ENCODE measurements at regions of chr6 and their contacts with region 1.

Region 1: DNA sequence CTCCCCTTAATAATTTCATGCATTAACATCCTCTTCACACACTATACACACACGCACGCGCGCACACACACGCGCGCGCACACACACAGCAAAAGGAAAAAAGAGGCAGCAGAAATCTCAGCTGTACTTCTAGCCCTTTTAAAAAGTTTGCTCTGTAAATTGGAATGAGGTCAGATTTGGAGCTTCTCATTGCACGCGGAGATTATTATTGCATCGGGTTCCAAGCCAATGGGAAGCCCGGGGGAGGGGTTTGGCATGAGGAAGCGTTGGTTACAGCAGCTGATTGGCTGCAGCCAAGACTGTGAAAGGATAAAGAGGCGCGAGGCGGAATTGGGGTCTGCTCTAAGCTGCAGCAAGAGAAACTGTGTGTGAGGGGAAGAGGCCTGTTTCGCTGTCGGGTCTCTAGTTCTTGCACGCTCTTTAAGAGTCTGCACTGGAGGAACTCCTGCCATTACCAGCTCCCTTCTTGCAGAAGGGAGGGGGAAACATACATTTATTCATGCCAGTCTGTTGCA is at the start of gene SOX4:
- DNase-seq: peak in 34 of 35 experiments; percentile 14 to 82 (median 66)
- ATAC-seq: peak; percentile 59 to 82 (median 66)
- H3K4me3 ChIP-seq: peak within 1 kb of the TSS; percentile 55 to 98
- H3K4me3 Mint-ChIP-seq: peak within 1 kb of the TSS in 2 of 3 donors; percentile 83 to 87
- H3K27ac ChIP-seq: no peak within 1 kb of the TSS
- H3K27ac Mint-ChIP-seq: peak within 1 kb of the TSS; percentile 52 to 77
- H3K4me1 ChIP-seq: peaks cover 5 to 31% of the 10 kb centered on the region in 2 experiments
- H3K4me1 Mint-ChIP-seq: peaks cover 25 to 30% (median 26%) of the 10 kb centered on the region in 3 donors
- H3K27me3 ChIP-seq: peaks cover 0 to 42% of the 10 kb centered on the region in 2 experiments
- H3K27me3 Mint-ChIP-seq: peaks cover 15 to 47% of the 10 kb centered on the region in 2 donors
- total RNA-seq, gene SOX4: 1.5 to 15.8 (median 2.9) TPM

Region 2: DNA sequence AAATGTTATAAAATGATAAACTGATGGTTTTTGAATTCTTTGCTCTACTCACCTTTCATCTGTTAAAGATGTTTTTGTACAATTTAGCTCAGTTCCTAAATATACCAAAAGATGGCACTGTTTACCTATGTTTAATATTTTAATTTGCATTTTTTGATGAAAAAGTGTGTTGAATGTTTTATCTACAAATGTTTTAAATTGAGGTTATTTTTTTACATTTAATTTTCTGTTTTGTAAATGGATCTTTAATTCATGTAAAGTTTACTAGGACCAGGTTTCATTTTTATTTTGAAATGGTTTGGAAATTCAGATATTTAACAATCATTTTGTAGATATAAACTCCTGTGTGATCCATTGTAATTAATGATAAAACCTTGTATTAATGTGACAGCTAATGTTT is 1029.2 kb before region 1 on chr6:
- CTCF ChIA-PET with region 1: interaction called, 25 to 120 read pairs
- POLR2A ChIA-PET with region 1: no interaction called
- DNase-seq: peak in 1 of 35 experiments; percentile 52
- ATAC-seq: no peak
- H3K4me3 ChIP-seq: no peak overlapping the region
- H3K4me3 Mint-ChIP-seq: no peak overlapping the region
- H3K27ac ChIP-seq: no peak overlapping the region
- H3K27ac Mint-ChIP-seq: no peak overlapping the region
- H3K4me1 ChIP-seq: peaks cover 0 to 15% of the 10 kb centered on the region in 2 experiments
- H3K4me1 Mint-ChIP-seq: peaks cover 9 to 12% (median 12%) of the 10 kb centered on the region in 3 donors
- H3K27me3 ChIP-seq: no peaks in the 10 kb centered on the region
- H3K27me3 Mint-ChIP-seq: no peaks in the 10 kb centered on the region

Region 3: DNA sequence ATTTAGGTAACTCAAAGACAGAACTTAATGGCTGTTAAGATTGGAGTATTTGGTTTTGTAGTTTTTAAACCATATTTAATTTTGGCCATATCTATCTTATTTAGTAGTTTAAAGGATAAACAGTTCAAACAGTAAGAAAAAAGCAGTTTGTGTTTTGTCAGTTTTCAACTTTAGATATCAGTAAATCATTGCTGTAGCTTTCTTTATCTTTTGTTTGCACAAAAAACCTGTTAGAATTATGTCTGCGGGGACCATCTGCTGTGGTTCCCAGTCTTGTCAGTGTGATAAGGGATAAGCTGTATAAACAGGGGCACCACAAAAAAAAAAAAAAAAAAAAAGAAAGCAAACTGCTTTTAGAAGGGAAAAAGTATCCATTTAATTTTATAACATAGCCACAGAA is 1018.3 kb before region 1 on chr6:
- CTCF ChIA-PET with region 1: interaction called in 1 of 2 experiments, 3 read pairs
- POLR2A ChIA-PET with region 1: interaction called in 1 of 2 experiments, 12 read pairs
- DNase-seq: no peak
- ATAC-seq: no peak
- H3K4me3 ChIP-seq: no peak overlapping the region
- H3K4me3 Mint-ChIP-seq: no peak overlapping the region
- H3K27ac ChIP-seq: no peak overlapping the region
- H3K27ac Mint-ChIP-seq: no peak overlapping the region
- H3K4me1 ChIP-seq: peaks cover 0 to 5% of the 10 kb centered on the region in 2 experiments
- H3K4me1 Mint-ChIP-seq: peaks cover 11 to 16% (median 13%) of the 10 kb centered on the region in 3 donors
- H3K27me3 ChIP-seq: no peaks in the 10 kb centered on the region
- H3K27me3 Mint-ChIP-seq: no peaks in the 10 kb centered on the region

Region 4: DNA sequence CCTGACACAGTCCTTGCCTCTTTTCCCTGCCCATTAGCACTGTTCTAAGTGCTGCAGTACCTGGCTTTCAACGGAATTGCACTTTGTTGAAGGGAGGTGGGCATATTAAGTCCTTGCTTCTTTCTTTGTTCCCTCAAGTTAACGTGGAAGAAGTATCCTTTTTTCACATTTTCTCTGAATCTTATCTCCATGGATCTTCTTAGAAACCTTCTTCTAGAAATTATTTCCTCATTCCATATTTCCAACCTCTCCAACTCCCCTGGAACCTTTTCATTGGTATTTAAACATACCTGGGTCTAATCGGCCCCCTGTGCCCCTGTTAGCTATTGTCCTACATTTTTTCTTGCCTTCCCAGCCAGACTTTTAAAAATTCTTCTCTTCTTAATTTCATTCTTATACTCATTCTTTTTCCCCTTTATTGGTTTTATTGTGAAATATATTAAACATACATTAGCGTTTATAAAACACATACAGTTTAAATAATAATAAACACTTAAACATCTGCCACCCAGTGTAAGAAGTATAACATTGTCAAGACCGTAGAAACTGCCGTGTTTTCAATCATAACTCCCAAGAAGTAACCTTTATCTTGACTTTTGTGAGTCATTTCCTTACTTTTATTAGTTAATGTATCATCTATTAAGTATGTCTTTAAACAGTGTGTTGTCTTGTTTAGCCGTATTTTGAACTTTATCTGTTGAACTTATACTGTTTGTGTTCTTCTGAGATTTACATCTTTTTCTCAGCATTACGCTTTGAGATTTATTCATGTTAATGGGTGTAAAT is 941.0 kb before region 1 on chr6:
- CTCF ChIA-PET with region 1: no interaction called
- POLR2A ChIA-PET with region 1: no interaction called
- DNase-seq: no peak
- ATAC-seq: no peak
- H3K4me3 ChIP-seq: no peak overlapping the region
- H3K4me3 Mint-ChIP-seq: no peak overlapping the region
- H3K27ac ChIP-seq: no peak overlapping the region
- H3K27ac Mint-ChIP-seq: no peak overlapping the region
- H3K4me1 ChIP-seq: no peaks in the 10 kb centered on the region
- H3K4me1 Mint-ChIP-seq: peaks cover 5 to 24% (median 22%) of the 10 kb centered on the region in 3 donors
- H3K27me3 ChIP-seq: no peaks in the 10 kb centered on the region
- H3K27me3 Mint-ChIP-seq: no peaks in the 10 kb centered on the region

Region 5: DNA sequence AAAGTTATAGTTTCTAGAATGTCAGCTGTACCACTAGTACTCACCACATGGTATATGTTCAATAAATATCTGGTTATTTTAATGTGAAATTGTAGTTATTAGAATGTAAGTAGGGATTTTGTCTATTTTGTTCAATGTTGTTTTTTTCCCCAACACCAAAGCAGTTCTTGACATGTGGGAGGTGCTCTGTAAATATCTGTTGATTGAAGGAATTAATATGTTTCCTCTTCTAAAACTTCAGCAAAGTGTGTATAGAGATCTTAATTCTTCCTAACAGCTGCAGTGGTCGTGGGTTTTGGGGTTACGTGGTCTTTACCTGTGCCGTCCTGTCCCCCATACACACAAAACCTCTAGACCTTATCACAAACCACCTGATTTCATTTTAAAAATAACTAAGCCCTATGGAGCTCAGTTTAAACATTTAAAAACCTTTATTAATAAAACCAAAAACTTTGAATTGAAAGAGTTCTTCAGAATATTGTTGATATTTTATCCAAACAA is 471.8 kb before region 1 on chr6:
- CTCF ChIA-PET with region 1: no interaction called
- POLR2A ChIA-PET with region 1: interaction called in 1 of 2 experiments, 14 read pairs
- DNase-seq: no peak
- ATAC-seq: no peak
- H3K4me3 ChIP-seq: no peak overlapping the region
- H3K4me3 Mint-ChIP-seq: no peak overlapping the region
- H3K27ac ChIP-seq: no peak overlapping the region
- H3K27ac Mint-ChIP-seq: no peak overlapping the region
- H3K4me1 ChIP-seq: no peaks in the 10 kb centered on the region
- H3K4me1 Mint-ChIP-seq: no peaks in the 10 kb centered on the region
- H3K27me3 ChIP-seq: no peaks in the 10 kb centered on the region
- H3K27me3 Mint-ChIP-seq: no peaks in the 10 kb centered on the region

Region 6: DNA sequence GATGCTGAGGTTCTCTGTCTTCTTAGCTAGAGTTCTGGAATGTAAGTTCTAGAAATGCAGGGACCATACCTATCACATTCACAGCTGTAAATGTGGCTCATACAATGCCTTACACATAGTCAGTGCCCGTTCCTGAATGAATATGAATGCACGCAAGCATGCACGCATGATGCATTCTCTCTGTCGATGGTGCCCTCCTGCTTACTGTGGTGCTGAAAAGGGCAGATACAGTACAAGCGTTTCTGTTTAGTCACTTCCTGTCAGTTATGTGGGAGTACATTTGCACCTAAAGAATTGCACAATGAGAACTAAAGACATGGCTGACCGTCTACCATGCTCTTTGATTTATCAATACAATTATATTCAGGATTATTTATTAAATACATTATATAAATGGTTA is 152.1 kb before region 1 on chr6:
- CTCF ChIA-PET with region 1: no interaction called
- POLR2A ChIA-PET with region 1: no interaction called
- DNase-seq: no peak
- ATAC-seq: no peak
- H3K4me3 ChIP-seq: no peak overlapping the region
- H3K4me3 Mint-ChIP-seq: no peak overlapping the region
- H3K27ac ChIP-seq: no peak overlapping the region
- H3K27ac Mint-ChIP-seq: no peak overlapping the region
- H3K4me1 ChIP-seq: peaks cover 4 to 8% of the 10 kb centered on the region in 2 experiments
- H3K4me1 Mint-ChIP-seq: peaks cover 11 to 27% (median 16%) of the 10 kb centered on the region in 3 donors
- H3K27me3 ChIP-seq: no peaks in the 10 kb centered on the region
- H3K27me3 Mint-ChIP-seq: no peaks in the 10 kb centered on the region

Region 7: DNA sequence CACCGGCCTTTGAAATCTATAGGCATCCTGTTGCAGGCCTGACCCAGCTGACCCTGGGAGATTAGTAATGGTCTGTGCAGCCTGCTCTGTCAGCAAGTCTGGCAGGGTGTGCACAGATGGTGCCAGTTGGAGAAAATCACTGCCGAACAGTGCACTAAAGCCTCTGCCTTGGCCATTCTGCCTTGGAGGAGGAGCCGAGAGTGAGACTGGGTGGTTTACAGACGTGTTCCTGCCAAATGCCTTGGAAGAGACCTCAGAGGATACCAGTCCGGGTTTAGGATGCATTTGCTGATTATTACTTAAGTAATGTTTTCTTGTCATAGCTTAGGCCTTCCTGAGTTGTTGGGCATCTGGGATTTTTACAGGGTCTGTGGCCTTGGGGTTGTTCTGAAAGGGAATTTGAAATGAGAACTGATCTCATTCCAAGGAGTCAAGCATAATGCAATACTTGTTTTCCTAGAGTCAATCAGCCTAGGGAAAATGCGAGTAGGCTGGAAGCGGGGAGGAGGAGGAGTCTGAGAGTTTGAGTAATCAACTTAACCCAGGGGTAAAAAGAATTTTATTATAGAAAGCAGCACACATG is 292.2 kb after region 1 on chr6:
- CTCF ChIA-PET with region 1: no interaction called
- POLR2A ChIA-PET with region 1: no interaction called
- DNase-seq: no peak
- ATAC-seq: no peak
- H3K4me3 ChIP-seq: peak overlapping the region in 1 of 2 donors; percentile 55
- H3K4me3 Mint-ChIP-seq: no peak overlapping the region
- H3K27ac ChIP-seq: no peak overlapping the region
- H3K27ac Mint-ChIP-seq: no peak overlapping the region
- H3K4me1 ChIP-seq: peaks cover 0 to 19% of the 10 kb centered on the region in 2 experiments
- H3K4me1 Mint-ChIP-seq: peaks cover 0 to 9% (median 8%) of the 10 kb centered on the region in 3 donors
- H3K27me3 ChIP-seq: no peaks in the 10 kb centered on the region
- H3K27me3 Mint-ChIP-seq: no peaks in the 10 kb centered on the region